Spleen (tissue), 13 donors: ENCODE measurements at regions of chr1 and their contacts with region 1.

Region 1: GRCh38 chr1:28736450-28737306 is at the start of gene YTHDF2:
- DNase-seq: peak; percentile 100
- H3K4me3 ChIP-seq: peak within 1 kb of the TSS; percentile 82 to 99 (median 88)
- H3K27ac ChIP-seq: peak within 1 kb of the TSS; percentile 91 to 97 (median 96)
- H3K4me1 ChIP-seq: peaks cover 35 to 55% (median 51%) of the 10 kb centered on the region in 6 donors
- H3K27me3 ChIP-seq: no peaks in the 10 kb centered on the region
- CTCF ChIP-seq: peak; percentile 80 to 99 (median 97)
- POLR2A ChIP-seq: peak in 2 of 3 donors; percentile 34 to 96
- total RNA-seq, gene YTHDF2: 52.7 to 67.5 (median 58.0) TPM

Region 2: DNA sequence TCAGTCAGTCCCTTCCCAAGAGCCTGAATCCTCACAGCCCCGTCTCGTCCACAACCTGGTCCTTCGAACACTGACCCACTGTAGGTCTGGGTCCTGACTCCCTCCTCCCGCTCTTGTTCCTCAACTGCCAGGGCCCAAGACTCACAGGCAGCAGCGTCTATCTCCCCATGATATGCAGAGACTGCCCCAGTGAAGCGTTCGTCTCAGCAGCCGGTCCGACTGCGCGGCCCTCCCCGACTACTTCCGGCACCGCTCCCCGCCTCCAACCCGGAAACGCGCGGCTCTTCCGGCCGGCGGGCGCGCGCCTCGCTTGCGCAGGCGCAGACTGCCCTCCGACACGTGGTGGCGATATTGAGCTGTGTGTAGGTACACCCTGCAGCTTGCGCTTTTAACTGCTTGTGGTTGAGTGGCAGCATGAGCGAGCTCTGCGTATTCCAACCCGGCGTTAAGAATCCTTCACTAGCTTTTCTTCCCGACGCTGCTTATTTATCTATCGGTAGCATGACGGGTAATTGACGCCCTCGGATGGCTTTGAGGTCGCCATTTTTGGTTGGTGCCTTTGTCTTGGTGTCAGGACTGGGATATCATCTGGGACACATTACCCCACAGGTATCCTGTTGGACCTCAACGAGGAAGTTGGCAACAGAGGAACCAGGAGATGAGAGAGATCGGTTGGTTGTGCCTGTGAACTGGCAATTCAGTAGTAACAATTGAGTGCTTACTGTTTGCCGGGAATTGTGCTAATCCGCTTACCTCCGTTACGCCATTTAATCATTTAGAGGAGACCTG is 93.6 kb before region 1 on chr1 and contains the start of gene TAF12:
- intact Hi-C with region 1: loop called (anchors 2 kb)
- DNase-seq: peak; percentile 97
- H3K4me3 ChIP-seq: peak within 1 kb of the TSS; percentile 55 to 83 (median 69)
- H3K27ac ChIP-seq: peak within 1 kb of the TSS; percentile 86 to 96 (median 93)
- H3K4me1 ChIP-seq: peaks cover 18 to 70% (median 44%) of the 10 kb centered on the region in 6 donors
- H3K27me3 ChIP-seq: no peaks in the 10 kb centered on the region
- CTCF ChIP-seq: peak in 9 of 11 experiments; percentile 24 to 68 (median 53)
- POLR2A ChIP-seq: peak; percentile 67 to 91 (median 90)
- total RNA-seq, gene TAF12: 17.0 to 28.7 (median 18.9) TPM